Posterior cingulate gyrus (tissue), 11 donors: ENCODE measurements at regions of chr2 and their contacts with region 1.

Region 1: DNA sequence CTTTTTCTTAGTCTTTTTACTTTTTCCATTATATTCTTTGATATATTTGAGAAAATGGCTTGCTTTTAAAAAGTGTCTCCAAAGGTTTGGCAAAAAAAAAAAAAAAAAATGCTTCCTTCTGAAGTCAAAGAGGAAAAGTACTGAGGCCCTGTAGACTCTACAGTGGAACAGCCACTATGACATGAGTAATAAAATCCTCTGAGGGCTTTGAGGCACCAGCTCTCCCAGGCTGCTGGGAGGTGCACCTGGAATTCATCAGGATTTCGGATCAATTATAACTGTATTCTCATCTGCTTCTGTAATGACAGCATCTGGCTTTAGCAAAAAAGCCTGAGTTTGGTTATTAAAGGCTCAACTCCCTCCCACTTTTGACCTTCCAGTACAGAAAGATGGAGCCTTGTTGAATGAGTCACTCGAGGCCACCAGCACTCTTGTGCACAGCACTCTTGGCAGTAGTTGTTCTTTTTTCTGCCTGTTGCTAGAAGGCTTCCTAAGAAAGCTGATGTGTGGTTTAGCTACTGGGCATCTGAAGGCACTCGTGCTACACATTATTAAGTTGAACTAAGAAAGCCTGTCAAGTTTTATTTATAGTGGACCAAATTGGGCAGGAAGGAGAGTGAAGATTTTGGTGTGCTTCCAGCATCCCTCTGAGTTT is 131.3 kb downstream of the PRPF40A start:
- DNase-seq: no peak

Region 2: DNA sequence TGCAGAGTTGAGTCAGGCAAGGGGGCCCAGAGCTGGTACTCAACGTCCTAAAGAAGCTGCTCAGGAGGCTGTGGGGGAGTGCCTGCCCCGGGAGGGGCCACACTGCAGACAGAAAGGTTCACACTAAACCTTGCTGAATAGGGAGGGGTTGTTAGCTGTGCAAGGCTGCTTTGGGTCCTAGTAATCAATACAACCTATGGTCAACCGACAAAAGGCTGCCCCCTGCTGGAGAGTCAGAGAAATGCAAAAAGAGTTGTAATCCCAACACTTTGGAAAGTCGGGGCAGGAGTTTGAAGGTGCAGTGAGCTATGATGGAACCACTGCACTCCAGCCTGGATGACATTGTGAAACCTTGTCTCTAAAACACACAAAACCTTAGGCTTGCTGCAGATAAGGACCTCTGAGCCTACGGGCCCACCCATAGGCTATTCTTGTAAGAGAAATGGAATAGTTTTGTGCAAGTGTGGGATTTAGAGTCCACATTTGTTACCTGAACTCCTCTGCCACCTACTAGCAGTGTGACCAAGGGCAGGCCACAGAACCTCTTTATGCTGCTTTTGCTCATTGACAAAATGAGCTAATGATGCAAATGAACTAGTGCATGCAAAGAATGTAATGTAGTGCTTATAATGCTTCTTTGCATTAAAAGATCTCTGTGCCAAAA is 49.8 kb after region 1 on chr2:
- intact Hi-C with region 1: loop called (anchors 5 kb)
- DNase-seq: peak in 7 of 10 donors; percentile 31 to 83 (median 70)